Heart right ventricle (tissue), 16 donors: ENCODE measurements at regions of chr12 and their contacts with region 1.

Region 1: DNA sequence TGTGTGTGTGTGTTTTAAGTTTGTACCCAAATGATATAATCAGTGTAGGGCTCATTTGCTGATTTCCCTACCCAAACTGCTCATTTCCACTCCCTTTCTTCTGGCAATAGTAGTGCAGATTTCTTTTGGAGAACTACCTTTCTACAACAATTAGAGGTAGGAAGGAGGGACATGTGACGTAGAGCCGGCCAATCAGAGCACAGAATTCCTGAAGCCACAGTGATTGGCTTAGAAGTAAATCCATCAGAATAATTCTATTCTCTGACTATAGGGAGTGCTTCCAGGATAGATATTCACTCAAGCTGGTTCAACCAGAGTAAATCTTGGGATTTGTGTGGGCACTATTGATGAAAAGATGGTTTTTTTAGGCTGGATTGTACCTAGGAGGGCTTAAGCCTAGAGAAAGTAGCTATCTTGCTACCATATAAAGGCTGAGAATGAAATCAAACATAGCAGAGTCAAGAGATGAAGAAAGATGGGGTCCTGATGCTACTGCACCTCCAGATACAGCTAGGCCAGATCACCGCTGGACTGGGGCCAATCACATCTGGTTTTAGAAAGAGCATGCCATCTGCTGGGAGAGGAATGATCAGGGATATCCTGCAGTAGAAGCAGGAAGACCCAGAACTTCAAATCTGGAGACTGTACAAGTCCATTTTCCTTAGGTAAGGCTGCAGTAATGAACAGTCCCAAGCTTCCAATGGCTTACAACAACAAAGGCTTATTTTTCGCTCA is 54.1 kb upstream of the NUAK1 start:
- DNase-seq: no peak
- ATAC-seq: no peak
- H3K4me3 ChIP-seq: no peak overlapping the region
- H3K27ac ChIP-seq: no peak overlapping the region
- H3K4me1 ChIP-seq: peaks cover 0 to 27% (median 11%) of the 10 kb centered on the region in 9 donors
- H3K27me3 ChIP-seq: no peaks in the 10 kb centered on the region
- CTCF ChIP-seq: no peak

Region 2: GRCh38 chr12:106154751-106155273 is 38.0 kb before region 1 on chr12:
- intact Hi-C with region 1: loop called in 1 of 10 experiments (anchors 5 kb)
- DNase-seq: no peak
- ATAC-seq: no peak
- H3K4me3 ChIP-seq: no peak overlapping the region
- H3K27ac ChIP-seq: no peak overlapping the region
- H3K4me1 ChIP-seq: peaks cover 0 to 4% (median 0%) of the 10 kb centered on the region in 9 donors
- H3K27me3 ChIP-seq: no peaks in the 10 kb centered on the region
- CTCF ChIP-seq: no peak

Region 3: DNA sequence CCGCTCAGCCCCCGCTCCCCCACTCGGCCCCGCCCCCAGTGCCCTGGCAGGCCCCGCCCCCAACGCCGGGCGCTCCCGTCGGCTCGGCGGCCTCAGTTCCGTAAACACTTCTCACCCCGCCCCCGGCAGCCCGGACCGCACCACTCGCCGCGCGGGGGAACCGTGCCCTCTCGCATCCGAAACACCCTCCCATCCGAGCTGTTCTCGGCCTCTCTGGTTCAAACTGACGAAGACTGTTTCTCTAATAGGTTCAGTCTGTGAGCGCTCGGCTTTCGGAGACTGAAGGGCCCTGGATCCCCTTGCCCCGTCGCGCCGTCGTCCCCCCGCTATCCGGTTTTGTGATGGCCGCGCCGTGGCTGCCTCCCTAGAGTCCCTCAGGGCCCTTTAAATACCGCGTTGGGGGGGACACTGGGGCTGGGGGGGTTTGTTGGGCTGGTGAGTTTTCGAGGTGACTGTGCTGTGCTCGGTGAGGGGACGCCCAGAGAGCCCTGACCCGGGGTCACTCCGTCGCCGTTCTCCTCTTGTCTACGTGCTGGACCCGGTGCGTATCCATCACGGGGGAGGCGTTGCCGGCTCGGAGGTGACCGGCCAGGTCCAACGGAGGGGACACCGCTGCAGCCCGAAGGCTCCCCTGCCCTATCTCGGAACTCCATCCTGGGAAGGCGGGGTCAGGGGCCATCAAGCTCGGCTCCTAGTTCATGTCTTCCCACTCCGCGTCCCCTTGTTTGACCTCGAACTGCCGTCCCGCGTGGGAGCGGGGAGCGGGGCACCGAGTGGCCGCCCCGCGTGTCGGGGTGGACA is 109.8 kb after region 1 on chr12 and contains the start of gene TCP11L2:
- intact Hi-C with region 1: no loop called
- DNase-seq: peak; percentile 93
- ATAC-seq: peak; percentile 83 to 90 (median 86)
- H3K4me3 ChIP-seq: peak within 1 kb of the TSS; percentile 56 to 96 (median 84)
- H3K27ac ChIP-seq: peak within 1 kb of the TSS; percentile 88 to 98 (median 98)
- H3K4me1 ChIP-seq: peaks cover 7 to 74% (median 68%) of the 10 kb centered on the region in 9 donors
- H3K27me3 ChIP-seq: no peaks in the 10 kb centered on the region
- CTCF ChIP-seq: no peak
- total RNA-seq, gene TCP11L2: 77.6 to 168 (median 120) TPM